ENCODE measurements at regions of chr5 and their contacts with region 1.

Region 1: GRCh38 chr5:35902046-35902676 is 36.3 kb downstream of the CAPSL start:
- DNase-seq: no peak
- ATAC-seq: peak; percentile 71
- H3K4me3 ChIP-seq: no peak overlapping the region
- H3K27ac ChIP-seq: peak overlapping the region; percentile 66
- H3K4me1 ChIP-seq: peaks cover 52% of the 10 kb centered on the region
- H3K27me3 ChIP-seq: no peaks in the 10 kb centered on the region
- CTCF ChIP-seq: no peak
- EP300 ChIP-seq: no peak
- POLR2A ChIP-seq: no peak
- RAD21 ChIP-seq: no peak

Region 2: GRCh38 chr5:35281613-35282012 is 620.5 kb before region 1 on chr5:
- CTCF ChIA-PET with region 1: no interaction called
- POLR2A ChIA-PET with region 1: no interaction called
- RAD21 ChIA-PET with region 1: no interaction called
- SMC1A ChIA-PET with region 1: no interaction called
- in situ Hi-C with region 1: no loop called
- intact Hi-C with region 1: no loop called
- DNase-seq: no peak
- ATAC-seq: no peak
- H3K4me3 ChIP-seq: no peak overlapping the region
- H3K27ac ChIP-seq: no peak overlapping the region
- H3K4me1 ChIP-seq: no peaks in the 10 kb centered on the region
- H3K27me3 ChIP-seq: no peaks in the 10 kb centered on the region
- CTCF ChIP-seq: no peak
- EP300 ChIP-seq: no peak
- POLR2A ChIP-seq: no peak
- RAD21 ChIP-seq: no peak

Region 3: DNA sequence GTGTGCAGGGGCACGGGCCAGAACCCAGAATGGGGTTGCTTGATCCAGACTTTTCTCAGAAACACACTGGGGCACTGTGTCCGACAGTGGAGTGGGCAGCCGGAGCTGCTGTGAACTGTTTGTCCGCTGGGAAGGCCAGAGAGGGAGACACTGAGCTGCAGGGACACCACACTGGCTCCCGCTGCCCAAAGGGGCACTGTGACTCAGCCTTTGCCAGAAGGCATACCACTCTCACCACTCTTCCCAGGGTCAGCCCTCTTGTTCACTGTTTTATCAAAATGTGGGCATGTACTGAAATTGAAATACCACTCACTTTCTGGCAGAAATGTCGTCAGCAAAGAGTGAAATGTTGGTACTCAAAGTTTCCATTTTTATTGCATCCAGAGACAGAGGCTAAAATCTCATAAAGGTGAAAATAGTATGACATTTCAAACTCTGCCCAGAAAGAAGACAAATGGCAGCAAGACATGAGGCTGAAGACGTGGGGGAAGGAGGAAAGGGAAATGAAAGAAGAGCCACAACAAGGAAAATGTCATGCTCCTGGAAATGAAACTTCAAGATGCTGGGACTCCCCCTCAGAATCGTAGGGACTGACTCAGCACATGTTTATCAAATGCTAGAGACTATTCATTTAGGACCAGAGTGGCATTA is 50.0 kb before region 1 on chr5:
- CTCF ChIA-PET with region 1: interaction called, 8 read pairs
- POLR2A ChIA-PET with region 1: interaction called, 23 read pairs
- RAD21 ChIA-PET with region 1: interaction called, 13 read pairs
- SMC1A ChIA-PET with region 1: interaction called, 238 read pairs
- in situ Hi-C with region 1: no loop called
- intact Hi-C with region 1: loop called (anchors 2 kb)
- DNase-seq: peak; percentile 26
- ATAC-seq: peak; percentile 65
- H3K4me3 ChIP-seq: no peak overlapping the region
- H3K27ac ChIP-seq: no peak overlapping the region
- H3K4me1 ChIP-seq: peaks cover 18% of the 10 kb centered on the region
- H3K27me3 ChIP-seq: no peaks in the 10 kb centered on the region
- CTCF ChIP-seq: peak in 2 of 3 experiments; percentile 3 to 23; a peak in 1 of 6 replicates
- EP300 ChIP-seq: peak; percentile 31 to 41; a peak in 1 of 4 replicates
- POLR2A ChIP-seq: no peak
- RAD21 ChIP-seq: no peak

Region 4: GRCh38 chr5:35857606-35858205 is 44.5 kb before region 1 on chr5:
- CTCF ChIA-PET with region 1: interaction called, 9 read pairs
- POLR2A ChIA-PET with region 1: interaction called, 23 read pairs
- RAD21 ChIA-PET with region 1: interaction called, 16 read pairs
- SMC1A ChIA-PET with region 1: interaction called, 238 read pairs
- in situ Hi-C with region 1: no loop called
- intact Hi-C with region 1: loop called (anchors 2 kb)
- DNase-seq: no peak
- ATAC-seq: no peak
- H3K4me3 ChIP-seq: no peak overlapping the region
- H3K27ac ChIP-seq: no peak overlapping the region
- H3K4me1 ChIP-seq: peaks cover 12% of the 10 kb centered on the region
- H3K27me3 ChIP-seq: no peaks in the 10 kb centered on the region
- CTCF ChIP-seq: no peak
- EP300 ChIP-seq: no peak
- POLR2A ChIP-seq: no peak
- RAD21 ChIP-seq: no peak

Region 5: GRCh38 chr5:35863159-35863558 is 39.0 kb before region 1 on chr5:
- CTCF ChIA-PET with region 1: interaction called, 9 read pairs
- POLR2A ChIA-PET with region 1: interaction called, 23 read pairs
- RAD21 ChIA-PET with region 1: interaction called, 16 read pairs
- SMC1A ChIA-PET with region 1: interaction called, 238 read pairs
- in situ Hi-C with region 1: no loop called
- intact Hi-C with region 1: no loop called
- DNase-seq: no peak
- ATAC-seq: peak; percentile 87
- H3K4me3 ChIP-seq: no peak overlapping the region
- H3K27ac ChIP-seq: no peak overlapping the region
- H3K4me1 ChIP-seq: peaks cover 5% of the 10 kb centered on the region
- H3K27me3 ChIP-seq: no peaks in the 10 kb centered on the region
- CTCF ChIP-seq: no peak
- EP300 ChIP-seq: no peak
- POLR2A ChIP-seq: no peak
- RAD21 ChIP-seq: no peak

Region 6: DNA sequence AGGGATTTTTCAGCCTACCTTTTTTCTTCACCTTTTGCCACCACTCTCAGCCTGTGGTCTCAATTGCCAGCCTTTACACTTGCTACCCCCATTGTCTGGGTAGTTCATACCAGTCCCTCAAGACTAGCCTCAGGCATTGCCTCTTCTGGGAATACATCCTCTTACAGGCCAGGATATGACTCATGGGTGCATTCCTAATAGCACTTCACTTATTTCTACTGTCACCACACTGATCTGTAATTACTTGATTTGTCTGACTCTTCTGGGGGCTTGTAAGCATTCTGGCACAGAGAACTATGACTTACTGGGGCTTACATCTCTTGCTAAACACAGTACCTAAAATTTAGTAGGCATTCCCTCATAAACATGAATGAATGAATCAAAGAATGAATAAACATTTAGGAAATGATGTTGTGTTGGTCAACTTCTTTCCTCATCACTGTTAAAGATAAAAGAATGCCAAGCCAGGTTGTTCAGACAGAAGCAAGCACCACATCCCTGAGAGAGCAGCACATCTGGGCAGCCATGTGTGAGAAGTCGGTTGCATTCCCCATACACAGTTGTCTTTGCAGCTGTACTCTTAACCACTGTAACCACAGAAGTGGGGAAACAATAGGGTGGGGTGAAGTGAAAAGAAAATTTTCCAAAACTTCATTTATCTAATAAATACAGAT is 17.9 kb before region 1 on chr5:
- CTCF ChIA-PET with region 1: interaction called, 8 read pairs
- POLR2A ChIA-PET with region 1: interaction called, 5 read pairs
- RAD21 ChIA-PET with region 1: interaction called, 9 read pairs
- SMC1A ChIA-PET with region 1: interaction called, 43 read pairs
- in situ Hi-C with region 1: no loop called
- intact Hi-C with region 1: no loop called
- DNase-seq: no peak
- ATAC-seq: peak; percentile 91
- H3K4me3 ChIP-seq: no peak overlapping the region
- H3K27ac ChIP-seq: no peak overlapping the region
- H3K4me1 ChIP-seq: peaks cover 3% of the 10 kb centered on the region; the same call in 1 of the 2 replicates
- H3K27me3 ChIP-seq: no peaks in the 10 kb centered on the region
- CTCF ChIP-seq: no peak
- EP300 ChIP-seq: 0 out of 4 replicates have a peak, but pooled peaks of 1 of the 2 experiments have one; percentile 45
- POLR2A ChIP-seq: no peak
- RAD21 ChIP-seq: no peak

Region 7: DNA sequence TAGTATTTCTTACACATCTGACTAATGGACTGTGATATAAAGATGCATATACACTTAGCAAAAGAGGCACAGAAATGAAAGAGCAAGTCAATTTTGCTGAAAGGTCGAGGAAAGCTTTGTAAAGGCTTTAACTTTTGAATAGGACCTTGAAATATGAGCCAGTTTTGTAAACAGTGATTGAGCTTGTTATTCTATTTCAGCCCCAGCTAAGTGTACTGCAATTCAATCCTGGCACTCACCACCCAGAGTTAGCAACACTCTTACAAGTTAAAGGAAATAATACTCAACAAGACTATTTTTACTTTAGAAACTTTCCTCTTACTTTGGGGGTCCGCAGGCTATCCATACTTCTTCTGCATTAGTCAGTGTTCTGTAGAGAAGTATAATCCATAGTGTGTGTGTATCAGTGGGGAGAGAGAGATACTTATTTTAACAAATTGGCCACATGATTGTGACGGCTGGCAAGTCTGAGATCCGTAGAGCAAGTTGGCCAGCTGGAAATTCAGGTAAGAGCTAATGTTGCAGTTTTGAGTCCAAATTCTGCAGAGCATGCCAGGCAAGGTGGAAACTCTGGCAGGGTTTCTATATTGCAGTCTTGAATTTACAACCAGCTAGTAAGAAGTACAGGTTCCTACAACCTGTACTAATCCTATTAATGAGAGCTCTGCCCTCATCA is 12.0 kb before region 1 on chr5:
- CTCF ChIA-PET with region 1: interaction called, 8 read pairs
- POLR2A ChIA-PET with region 1: interaction called, 3 read pairs
- RAD21 ChIA-PET with region 1: interaction called, 9 read pairs
- SMC1A ChIA-PET with region 1: interaction called, 19 read pairs
- in situ Hi-C with region 1: no loop called
- intact Hi-C with region 1: no loop called
- DNase-seq: no peak
- ATAC-seq: no peak; the same call in 2 of the 3 replicates
- H3K4me3 ChIP-seq: no peak overlapping the region
- H3K27ac ChIP-seq: no peak overlapping the region
- H3K4me1 ChIP-seq: no peaks in the 10 kb centered on the region
- H3K27me3 ChIP-seq: no peaks in the 10 kb centered on the region
- CTCF ChIP-seq: no peak
- EP300 ChIP-seq: no peak
- POLR2A ChIP-seq: no peak
- RAD21 ChIP-seq: no peak

Region 8: GRCh38 chr5:35999547-35999946 is 97.4 kb after region 1 on chr5:
- CTCF ChIA-PET with region 1: no interaction called
- POLR2A ChIA-PET with region 1: no interaction called
- RAD21 ChIA-PET with region 1: no interaction called
- SMC1A ChIA-PET with region 1: no interaction called
- in situ Hi-C with region 1: no loop called
- intact Hi-C with region 1: no loop called
- DNase-seq: no peak
- ATAC-seq: no peak
- H3K4me3 ChIP-seq: no peak overlapping the region
- H3K27ac ChIP-seq: no peak overlapping the region
- H3K4me1 ChIP-seq: no peaks in the 10 kb centered on the region
- H3K27me3 ChIP-seq: no peaks in the 10 kb centered on the region
- CTCF ChIP-seq: no peak
- EP300 ChIP-seq: no peak
- POLR2A ChIP-seq: no peak
- RAD21 ChIP-seq: no peak

Region 9: GRCh38 chr5:36168737-36169136 is 266.6 kb after region 1 on chr5:
- CTCF ChIA-PET with region 1: no interaction called
- POLR2A ChIA-PET with region 1: no interaction called
- RAD21 ChIA-PET with region 1: no interaction called
- SMC1A ChIA-PET with region 1: no interaction called
- in situ Hi-C with region 1: no loop called
- intact Hi-C with region 1: no loop called
- DNase-seq: no peak
- ATAC-seq: no peak
- H3K4me3 ChIP-seq: no peak overlapping the region
- H3K27ac ChIP-seq: no peak overlapping the region
- H3K4me1 ChIP-seq: no peaks in the 10 kb centered on the region
- H3K27me3 ChIP-seq: no peaks in the 10 kb centered on the region
- CTCF ChIP-seq: no peak
- EP300 ChIP-seq: no peak
- POLR2A ChIP-seq: no peak
- RAD21 ChIP-seq: no peak

Region 10: DNA sequence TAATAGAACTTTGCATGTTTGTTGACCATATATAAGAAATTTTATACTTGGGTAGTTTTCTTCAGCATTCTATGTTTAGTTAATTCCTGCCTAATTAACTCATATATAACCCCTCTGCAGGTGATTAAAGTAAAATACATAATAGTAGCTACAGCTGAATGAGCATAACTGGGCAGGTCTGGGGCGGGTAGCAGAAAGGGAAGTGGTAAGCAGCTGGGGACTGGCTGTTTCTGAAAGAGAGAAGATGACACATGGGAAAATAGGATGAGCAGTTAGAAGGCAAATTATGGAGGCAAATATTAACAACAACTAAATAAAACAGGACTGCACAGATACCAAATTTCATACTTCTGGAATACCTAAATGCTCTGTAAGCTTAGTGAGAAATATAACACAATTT is 1218.9 kb after region 1 on chr5:
- CTCF ChIA-PET with region 1: no interaction called
- POLR2A ChIA-PET with region 1: no interaction called
- RAD21 ChIA-PET with region 1: no interaction called
- SMC1A ChIA-PET with region 1: no interaction called
- in situ Hi-C with region 1: no loop called
- intact Hi-C with region 1: no loop called
- DNase-seq: no peak
- ATAC-seq: peak; percentile 86
- H3K4me3 ChIP-seq: no peak overlapping the region
- H3K27ac ChIP-seq: no peak overlapping the region
- H3K4me1 ChIP-seq: no peaks in the 10 kb centered on the region
- H3K27me3 ChIP-seq: no peaks in the 10 kb centered on the region
- CTCF ChIP-seq: no peak
- EP300 ChIP-seq: no peak
- POLR2A ChIP-seq: no peak
- RAD21 ChIP-seq: no peak

Measured in GM12878 (cell line).